ENCODE measurements at regions of chr2 and their contacts with region 1.

Region 1: DNA sequence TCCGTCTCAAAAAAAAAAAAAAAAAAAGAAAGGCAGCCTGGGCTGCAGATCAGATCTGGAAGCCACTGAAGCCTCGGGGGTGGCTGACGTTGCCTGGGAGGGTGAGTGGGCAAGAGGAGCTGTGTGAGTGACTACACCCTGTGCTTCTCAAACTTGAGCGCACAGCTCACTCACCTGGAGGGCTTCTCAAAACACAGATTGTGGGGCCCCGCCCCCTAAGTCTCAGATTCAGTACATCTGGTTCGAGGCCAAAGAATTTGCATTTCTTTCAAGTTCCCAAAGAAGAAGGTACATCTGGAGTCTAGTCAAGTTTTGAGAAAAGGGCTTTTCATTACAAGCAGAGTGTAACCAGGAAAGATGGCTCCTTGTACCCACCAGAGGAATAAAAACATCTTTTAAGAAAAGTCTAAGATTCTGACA is 97.7 kb upstream of the CAB39 start:
- H3K4me3 Mint-ChIP-seq: no peak overlapping the region
- H3K27ac Mint-ChIP-seq: no peak overlapping the region
- H3K4me1 Mint-ChIP-seq: peaks cover 10% of the 10 kb centered on the region
- H3K27me3 Mint-ChIP-seq: peaks cover 2% of the 10 kb centered on the region

Region 2: GRCh38 chr2:230007931-230008707 is 606.8 kb before region 1 on chr2:
- intact Hi-C with region 1: loop called (anchors 1 kb)
- H3K4me3 Mint-ChIP-seq: no peak overlapping the region
- H3K27ac Mint-ChIP-seq: no peak overlapping the region
- H3K4me1 Mint-ChIP-seq: peaks cover 9% of the 10 kb centered on the region
- H3K27me3 Mint-ChIP-seq: no peaks in the 10 kb centered on the region

Region 3: DNA sequence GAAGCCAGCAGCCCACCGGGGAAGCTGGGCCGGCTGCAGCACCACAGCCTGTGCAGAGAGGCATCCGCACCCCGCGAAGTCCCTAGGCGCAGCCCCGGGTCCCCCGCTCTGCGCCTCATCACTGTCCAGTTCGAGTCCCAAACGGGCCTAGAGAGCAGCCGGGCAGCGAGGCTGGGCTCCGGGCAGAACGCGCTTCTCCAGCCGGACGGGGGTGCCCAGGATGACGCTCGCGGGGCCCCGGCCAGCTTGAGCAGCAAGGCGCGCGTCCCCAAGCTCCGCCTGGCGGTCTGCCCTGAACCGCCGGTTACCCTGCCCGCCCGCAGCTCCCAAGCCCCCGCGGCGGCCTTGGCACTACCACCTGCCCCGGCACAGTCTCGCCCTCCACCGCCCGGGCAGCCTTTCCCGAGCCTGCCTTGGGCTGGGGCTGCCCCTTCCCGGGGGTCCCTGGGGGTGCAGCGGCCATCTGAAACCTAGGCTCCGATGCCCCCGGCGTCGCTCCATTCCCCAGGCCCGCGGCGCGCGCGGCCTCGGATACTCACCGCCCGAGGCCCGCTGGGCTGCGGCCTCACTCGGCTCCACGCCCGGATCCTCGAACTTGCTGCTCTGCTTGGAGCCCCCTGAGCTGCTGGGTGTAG is 546.8 kb before region 1 on chr2:
- intact Hi-C with region 1: loop called (anchors 1 kb)
- H3K4me3 Mint-ChIP-seq: peak overlapping the region; percentile 63
- H3K27ac Mint-ChIP-seq: peak overlapping the region; percentile 46
- H3K4me1 Mint-ChIP-seq: peaks cover 26% of the 10 kb centered on the region
- H3K27me3 Mint-ChIP-seq: peaks cover 40% of the 10 kb centered on the region

Region 4: DNA sequence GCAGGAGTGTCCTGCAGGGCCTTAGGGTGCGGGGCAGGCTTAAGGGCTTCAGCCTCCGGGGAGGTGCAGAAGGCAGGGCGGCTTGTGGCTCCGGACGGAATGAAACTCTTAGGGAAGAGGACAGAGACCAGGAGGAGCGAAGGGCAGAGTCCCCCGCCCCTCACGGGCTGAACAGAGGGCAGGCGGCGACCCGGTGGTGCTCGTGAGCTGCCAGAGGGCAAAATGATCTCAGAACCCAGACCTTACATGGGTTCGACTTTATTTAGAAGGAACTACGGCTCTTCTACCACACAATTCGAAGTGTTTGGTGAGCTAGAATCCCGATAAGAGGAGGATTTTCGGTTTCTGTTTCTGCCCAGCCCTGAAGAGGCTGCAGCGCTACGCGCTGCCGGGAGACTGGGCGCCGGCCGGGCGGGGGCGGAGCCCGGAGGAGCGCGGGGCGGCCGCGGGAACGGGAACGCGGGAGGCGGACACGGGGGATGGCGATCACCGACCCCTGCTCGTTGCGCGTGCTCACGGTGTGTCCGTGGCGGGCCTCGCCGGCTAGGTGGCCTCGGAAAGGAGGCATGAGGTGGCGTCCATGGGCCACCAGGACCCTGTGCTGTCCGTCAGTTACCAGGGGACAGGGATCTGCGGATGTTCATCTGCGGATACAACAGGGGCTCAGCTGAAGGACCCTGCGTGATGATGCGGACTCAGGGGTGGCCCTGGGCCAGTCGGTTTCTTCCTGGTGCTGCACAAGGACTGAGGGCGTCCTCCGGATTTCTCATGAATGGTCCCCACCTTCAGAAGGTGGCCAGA is 203.2 kb before region 1 on chr2:
- intact Hi-C with region 1: no loop called
- H3K4me3 Mint-ChIP-seq: peak overlapping the region; percentile 94
- H3K27ac Mint-ChIP-seq: peak overlapping the region; percentile 96
- H3K4me1 Mint-ChIP-seq: peaks cover 66% of the 10 kb centered on the region
- H3K27me3 Mint-ChIP-seq: peaks cover 5% of the 10 kb centered on the region